ENCODE measurements at regions of chr10 and their contacts with region 1.

Region 1: DNA sequence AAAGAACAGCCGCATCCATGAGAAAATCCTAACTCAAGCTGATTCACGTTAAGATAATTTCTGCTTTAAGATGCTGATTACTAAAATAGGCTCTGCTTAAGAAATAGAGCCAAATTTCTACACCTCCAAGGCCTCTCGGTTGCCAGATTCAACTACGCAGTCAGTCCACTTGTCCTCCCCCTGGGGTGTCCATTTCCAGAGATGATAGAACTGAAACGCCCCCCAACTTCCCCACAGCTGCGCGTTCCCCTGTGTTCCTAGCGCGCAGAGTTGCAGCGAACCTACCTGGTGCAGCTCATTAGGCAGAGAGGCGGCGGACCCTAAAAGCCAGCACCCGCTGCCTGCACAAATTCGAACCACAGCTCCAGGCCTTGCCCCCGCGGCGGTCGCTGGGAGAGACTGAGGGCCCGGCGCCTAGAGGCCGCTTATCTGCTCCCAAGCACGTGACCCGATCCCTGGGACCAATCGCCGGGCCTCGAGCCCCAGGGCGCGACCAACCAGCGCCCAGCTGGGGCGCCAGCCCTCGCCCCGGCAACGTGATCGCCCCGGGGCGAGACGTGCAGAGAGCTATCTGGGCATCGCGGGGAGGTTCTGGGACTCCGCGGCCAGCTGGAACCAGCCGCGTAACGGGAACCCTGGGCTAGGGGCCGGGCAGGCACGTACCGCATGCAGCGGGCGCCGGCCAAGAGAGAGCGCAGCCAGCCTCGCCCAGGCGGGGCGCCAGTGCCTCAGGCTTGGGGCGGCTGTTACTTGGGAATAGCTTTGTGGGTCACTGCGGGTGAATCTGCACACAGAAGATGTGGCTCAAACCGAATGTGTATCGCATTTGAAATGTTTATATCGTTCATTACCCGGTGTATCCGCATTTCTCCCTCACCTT is at the start of gene PPP1R3C:
- DNase-seq: peak; percentile 88 to 89
- H3K4me3 ChIP-seq: peak within 1 kb of the TSS; percentile 55 to 65
- H3K27ac ChIP-seq: peak within 1 kb of the TSS; percentile 80 to 82
- H3K4me1 ChIP-seq: peaks cover 0 to 4% of the 10 kb centered on the region in 2 donors
- H3K27me3 ChIP-seq: no peaks in the 10 kb centered on the region
- CTCF ChIP-seq: peak; percentile 5 to 34 (median 20)
- POLR2A ChIP-seq: peak in 1 of 2 donors; percentile 77
- total RNA-seq, gene PPP1R3C: 19.7 to 55.2 (median 25.5) TPM

Region 2: GRCh38 chr10:91409869-91410637 is 222.9 kb before region 1 on chr10 and contains the start of gene HECTD2:
- intact Hi-C with region 1: loop called (anchors 5 kb)
- DNase-seq: peak; percentile 72 to 85
- H3K4me3 ChIP-seq: peak within 1 kb of the TSS; percentile 91 to 98
- H3K27ac ChIP-seq: peak within 1 kb of the TSS; percentile 100
- H3K4me1 ChIP-seq: peaks cover 0 to 4% of the 10 kb centered on the region in 2 donors
- H3K27me3 ChIP-seq: no peaks in the 10 kb centered on the region
- CTCF ChIP-seq: peak in 3 of 4 experiments; percentile 64 to 82 (median 64)
- POLR2A ChIP-seq: peak; percentile 12 to 59
- total RNA-seq, gene HECTD2: 21.0 to 65.7 (median 33.2) TPM

Region 3: GRCh38 chr10:91493313-91493712 is 139.6 kb before region 1 on chr10:
- intact Hi-C with region 1: loop called (anchors 10 kb)
- DNase-seq: no peak
- H3K4me3 ChIP-seq: no peak overlapping the region
- H3K27ac ChIP-seq: no peak overlapping the region
- H3K4me1 ChIP-seq: no peaks in the 10 kb centered on the region
- H3K27me3 ChIP-seq: no peaks in the 10 kb centered on the region
- CTCF ChIP-seq: peak; percentile 50 to 63 (median 52)
- POLR2A ChIP-seq: no peak